Endothelial cell of umbilical vein (primary cell): ENCODE measurements at regions of chr7 and their contacts with region 1.

Region 1: GRCh38 chr7:106461993-106462859 is 177.4 kb upstream of the NAMPT start:
- DNase-seq: peak; percentile 83
- H3K4me3 ChIP-seq: no peak overlapping the region
- H3K27ac ChIP-seq: peak overlapping the region; percentile 32
- H3K4me1 ChIP-seq: peaks cover 22% of the 10 kb centered on the region
- H3K27me3 ChIP-seq: no peaks in the 10 kb centered on the region
- CTCF ChIP-seq: peak; percentile 25 to 37
- POLR2A ChIP-seq: no peak

Region 2: GRCh38 chr7:106216517-106216922 is 245.7 kb before region 1 on chr7:
- CTCF ChIA-PET with region 1: interaction called, 18 read pairs
- POLR2A ChIA-PET with region 1: no interaction called
- dilution Hi-C with region 1: no loop called
- intact Hi-C with region 1: no loop called
- DNase-seq: peak; percentile 96
- H3K4me3 ChIP-seq: peak overlapping the region in 1 of 3 experiments; percentile 46
- H3K27ac ChIP-seq: peak overlapping the region; percentile 94
- H3K4me1 ChIP-seq: peaks cover 42% of the 10 kb centered on the region
- H3K27me3 ChIP-seq: no peaks in the 10 kb centered on the region
- CTCF ChIP-seq: no peak
- POLR2A ChIP-seq: peak; percentile 22

Region 3: DNA sequence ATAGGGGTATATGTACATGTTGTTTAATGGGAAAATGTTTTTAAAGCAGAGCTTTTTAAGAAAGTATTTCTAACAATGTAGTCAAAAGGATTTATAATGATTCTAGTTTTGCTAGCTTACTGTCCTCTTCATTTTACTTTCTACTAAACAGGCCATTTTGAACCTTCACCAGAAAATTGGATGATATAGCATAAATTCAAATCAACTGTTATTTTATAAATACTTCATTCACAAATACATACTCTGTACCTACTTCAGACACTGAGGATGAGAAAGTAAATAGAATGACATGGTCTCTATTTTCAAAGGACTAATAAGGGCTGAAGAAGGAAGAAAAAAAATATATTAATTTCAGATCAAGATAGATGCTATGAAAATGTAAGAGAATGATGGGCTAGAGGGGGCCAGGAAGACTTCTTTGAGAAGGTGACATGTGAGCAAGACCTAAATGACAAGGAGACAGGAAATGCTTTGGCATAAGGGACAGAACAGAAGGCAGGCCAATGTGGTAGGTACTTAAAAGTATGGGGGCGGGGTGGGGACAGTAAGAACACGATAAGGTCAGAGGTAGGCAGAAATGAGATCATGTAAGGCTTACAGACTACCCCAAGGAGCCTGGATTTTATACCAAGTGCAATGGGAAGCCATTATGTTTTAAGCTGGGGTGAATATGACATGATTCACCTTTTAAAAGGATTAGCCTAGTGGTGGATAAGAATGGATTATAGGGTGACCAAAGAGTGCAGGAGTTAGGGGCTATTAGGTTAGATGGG is 182.6 kb before region 1 on chr7:
- CTCF ChIA-PET with region 1: interaction called, 49 read pairs
- POLR2A ChIA-PET with region 1: interaction called, 11 read pairs
- dilution Hi-C with region 1: no loop called
- intact Hi-C with region 1: loop called (anchors 1 kb)
- DNase-seq: no peak
- H3K4me3 ChIP-seq: no peak overlapping the region
- H3K27ac ChIP-seq: no peak overlapping the region
- H3K4me1 ChIP-seq: peaks cover 38% of the 10 kb centered on the region
- H3K27me3 ChIP-seq: no peaks in the 10 kb centered on the region
- CTCF ChIP-seq: no peak
- POLR2A ChIP-seq: no peak

Region 4: GRCh38 chr7:106367018-106367420 is 95.2 kb before region 1 on chr7:
- CTCF ChIA-PET with region 1: interaction called, 13 read pairs
- POLR2A ChIA-PET with region 1: no interaction called
- dilution Hi-C with region 1: no loop called
- intact Hi-C with region 1: no loop called
- DNase-seq: peak; percentile 15
- H3K4me3 ChIP-seq: no peak overlapping the region
- H3K27ac ChIP-seq: no peak overlapping the region
- H3K4me1 ChIP-seq: no peaks in the 10 kb centered on the region
- H3K27me3 ChIP-seq: peaks cover 0 to 2% of the 10 kb centered on the region in 2 experiments
- CTCF ChIP-seq: peak; percentile 23 to 36
- POLR2A ChIP-seq: no peak

Region 5: GRCh38 chr7:106415433-106415832 is 46.8 kb before region 1 on chr7:
- CTCF ChIA-PET with region 1: interaction called, 18 read pairs
- POLR2A ChIA-PET with region 1: no interaction called
- dilution Hi-C with region 1: no loop called
- intact Hi-C with region 1: no loop called
- DNase-seq: no peak
- H3K4me3 ChIP-seq: no peak overlapping the region
- H3K27ac ChIP-seq: no peak overlapping the region
- H3K4me1 ChIP-seq: peaks cover 3% of the 10 kb centered on the region
- H3K27me3 ChIP-seq: peaks cover 0 to 2% of the 10 kb centered on the region in 2 experiments
- CTCF ChIP-seq: no peak
- POLR2A ChIP-seq: no peak

Region 6: GRCh38 chr7:106485031-106485551 is 22.9 kb after region 1 on chr7:
- CTCF ChIA-PET with region 1: interaction called, 13 read pairs
- POLR2A ChIA-PET with region 1: no interaction called
- dilution Hi-C with region 1: no loop called
- intact Hi-C with region 1: no loop called
- DNase-seq: peak; percentile 83
- H3K4me3 ChIP-seq: no peak overlapping the region
- H3K27ac ChIP-seq: peak overlapping the region; percentile 54
- H3K4me1 ChIP-seq: peaks cover 13% of the 10 kb centered on the region
- H3K27me3 ChIP-seq: no peaks in the 10 kb centered on the region
- CTCF ChIP-seq: no peak
- POLR2A ChIP-seq: no peak

Region 7: DNA sequence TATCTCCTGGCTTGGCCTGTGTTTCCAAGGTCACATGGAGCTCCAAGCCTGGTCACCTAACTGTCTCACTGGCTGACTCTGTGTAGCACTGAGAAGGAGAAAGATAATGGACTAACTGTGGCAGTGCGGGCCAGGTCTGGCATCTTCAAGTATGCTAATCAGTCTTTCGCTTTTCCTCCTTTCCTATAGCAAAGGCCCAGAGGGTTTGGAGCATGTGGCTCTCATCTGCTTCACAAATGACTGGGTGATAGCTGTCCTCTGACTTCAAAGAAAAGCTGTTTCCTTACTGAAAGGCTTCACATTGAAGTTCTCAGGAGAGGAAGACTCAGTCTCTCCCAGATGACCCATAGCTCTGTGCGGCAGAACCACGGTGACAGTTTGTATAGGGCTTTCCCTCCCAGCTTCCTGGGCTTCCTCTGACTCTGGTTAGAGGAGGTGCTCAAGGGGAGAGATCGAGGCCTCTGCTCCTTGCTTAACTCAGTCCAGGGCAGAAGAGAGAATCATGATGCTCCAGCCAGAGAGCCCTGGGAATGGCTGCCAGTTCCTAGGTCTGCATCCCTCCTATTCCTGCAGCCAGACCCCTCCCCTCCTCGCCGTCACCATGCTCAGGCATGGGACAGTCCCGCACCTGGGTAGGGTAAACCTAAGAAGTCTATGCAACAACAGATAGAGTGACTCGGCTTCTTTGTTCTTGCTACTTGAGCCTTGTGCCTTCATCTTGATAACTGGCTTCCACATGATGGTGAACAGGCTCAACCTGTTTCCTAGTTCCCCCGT is 126.4 kb after region 1 on chr7:
- CTCF ChIA-PET with region 1: interaction called, 11 read pairs
- POLR2A ChIA-PET with region 1: no interaction called
- dilution Hi-C with region 1: no loop called
- intact Hi-C with region 1: no loop called
- DNase-seq: no peak
- H3K4me3 ChIP-seq: no peak overlapping the region
- H3K27ac ChIP-seq: peak overlapping the region; percentile 89
- H3K4me1 ChIP-seq: peaks cover 30% of the 10 kb centered on the region
- H3K27me3 ChIP-seq: no peaks in the 10 kb centered on the region
- CTCF ChIP-seq: no peak
- POLR2A ChIP-seq: no peak

Region 8: DNA sequence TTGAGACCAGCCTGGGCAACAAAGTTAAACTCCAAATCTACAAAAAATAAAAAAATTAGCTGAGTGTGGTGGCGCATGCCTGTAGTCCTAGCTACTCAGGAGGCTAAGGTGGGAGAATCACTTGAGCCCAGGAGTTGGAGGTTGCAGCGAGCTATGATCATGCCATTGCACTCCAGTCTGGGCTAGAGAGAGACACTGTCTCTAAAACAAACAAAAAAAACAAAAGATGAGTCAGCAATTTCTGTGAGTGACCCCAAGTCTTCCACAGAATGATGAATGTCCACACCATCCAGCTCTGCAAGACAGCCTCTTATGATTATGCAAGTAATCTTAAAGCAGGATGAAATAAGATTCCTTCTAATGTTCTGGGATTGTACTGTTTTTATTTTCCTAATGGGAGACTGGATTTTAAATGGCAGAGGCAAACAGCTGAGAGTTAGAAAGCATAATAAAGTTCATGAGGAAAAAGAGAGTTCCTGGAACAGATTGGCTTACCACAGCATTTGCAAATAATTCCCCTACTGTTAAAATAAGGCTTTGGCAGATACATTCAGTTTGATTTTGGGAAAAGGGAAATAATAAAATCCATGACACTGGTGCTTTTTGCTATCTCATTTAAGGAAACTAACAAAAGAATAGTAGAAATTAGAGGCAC is 563.4 kb after region 1 on chr7:
- CTCF ChIA-PET with region 1: no interaction called
- POLR2A ChIA-PET with region 1: no interaction called
- dilution Hi-C with region 1: no loop called
- intact Hi-C with region 1: no loop called
- DNase-seq: no peak
- H3K4me3 ChIP-seq: no peak overlapping the region
- H3K27ac ChIP-seq: no peak overlapping the region
- H3K4me1 ChIP-seq: no peaks in the 10 kb centered on the region
- H3K27me3 ChIP-seq: no peaks in the 10 kb centered on the region
- CTCF ChIP-seq: no peak
- POLR2A ChIP-seq: no peak